Endothelial cell of umbilical vein (primary cell): ENCODE measurements at regions of chr20 and their contacts with region 1.

Region 1: DNA sequence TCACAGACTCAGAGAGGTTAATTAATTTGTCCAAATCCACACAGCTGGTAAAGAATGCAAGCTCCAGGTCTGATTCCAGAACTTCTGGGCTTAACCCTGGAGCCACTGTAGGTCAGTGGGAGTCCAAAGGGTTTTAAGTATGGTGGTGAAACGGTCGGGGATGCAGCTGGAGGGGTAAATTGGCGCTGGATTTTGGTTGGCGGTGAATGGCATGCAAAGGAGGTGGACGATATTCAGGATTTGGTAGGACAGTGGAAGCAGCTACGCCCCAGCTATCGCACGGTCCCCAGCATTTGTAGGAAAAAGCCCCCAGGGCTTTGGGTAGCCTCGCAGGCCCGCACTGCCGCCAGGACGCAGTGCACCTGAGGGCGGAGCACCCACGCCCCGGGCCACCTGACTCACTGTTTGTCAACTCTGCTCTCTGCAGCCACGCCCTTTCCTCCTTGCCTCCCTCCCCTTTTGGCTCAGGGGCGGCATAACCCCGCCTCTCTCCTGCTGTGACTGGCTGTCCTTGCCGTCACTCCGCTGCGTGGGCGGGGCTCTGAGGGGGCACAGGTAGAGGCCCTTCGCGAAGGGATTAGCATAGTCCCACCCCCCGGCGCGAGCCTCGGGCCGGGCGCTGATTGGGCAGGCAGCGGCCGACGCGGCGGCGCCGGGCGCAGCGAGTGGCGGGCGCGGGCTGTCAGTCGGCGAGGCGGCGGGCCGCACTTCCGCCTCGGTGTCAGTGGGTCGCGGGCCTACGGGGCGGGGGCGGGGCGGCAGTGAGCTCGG is at the start of gene OSBPL2:
- DNase-seq: peak; percentile 99
- H3K4me3 ChIP-seq: peak within 1 kb of the TSS in 2 of 3 experiments; percentile 20 to 74
- H3K27ac ChIP-seq: no peak within 1 kb of the TSS
- H3K4me1 ChIP-seq: peaks cover 5% of the 10 kb centered on the region
- H3K27me3 ChIP-seq: no peaks in the 10 kb centered on the region
- CTCF ChIP-seq: no peak
- POLR2A ChIP-seq: no peak
- total RNA-seq, gene OSBPL2: 32.7 and 33.0 TPM in 2 replicates

Region 2: DNA sequence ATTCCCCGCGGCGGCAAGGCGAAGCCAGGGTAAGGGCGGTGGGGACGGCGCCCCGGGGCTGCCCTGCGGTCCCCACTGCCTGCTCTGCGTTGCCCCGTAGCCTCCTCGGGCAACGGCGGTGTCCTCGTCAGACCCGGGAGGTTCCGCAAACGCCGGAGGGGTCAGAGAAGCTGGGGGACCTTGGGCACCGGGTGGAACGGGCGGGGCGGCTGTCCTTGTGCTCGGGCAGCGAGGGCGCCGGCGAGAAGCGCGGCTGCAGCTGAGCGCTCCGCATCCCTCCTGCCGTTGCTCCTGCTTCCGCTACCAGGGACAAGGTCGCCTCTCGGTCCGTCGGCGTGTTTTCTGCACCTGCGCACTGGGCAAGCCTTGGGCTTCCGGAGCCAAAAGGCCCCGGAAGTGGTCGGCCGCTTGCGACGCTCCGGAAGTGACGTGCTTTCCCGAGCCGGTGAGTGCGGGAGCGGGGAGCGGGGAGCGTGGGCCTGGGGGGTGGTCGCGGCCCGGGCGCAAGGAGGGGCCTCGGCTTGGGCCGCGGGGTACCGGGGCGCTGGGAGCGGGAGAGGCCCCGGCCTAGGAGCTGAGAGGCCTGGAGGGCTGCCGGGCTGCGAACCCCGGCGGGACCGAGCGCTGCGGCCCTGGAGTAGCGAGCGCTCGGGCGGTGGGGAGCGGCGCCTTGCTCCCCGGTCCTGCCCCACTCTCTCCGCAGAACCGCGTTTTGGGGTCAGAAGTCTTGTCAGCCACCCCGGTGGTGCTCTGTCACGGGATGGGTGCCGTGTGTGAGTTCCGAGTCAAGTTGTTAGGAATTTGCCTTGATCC is 55.2 kb before region 1 on chr20 and contains the start of gene MTG2:
- CTCF ChIA-PET with region 1: no interaction called
- POLR2A ChIA-PET with region 1: no interaction called
- dilution Hi-C with region 1: no loop called
- intact Hi-C with region 1: loop called (anchors 1 kb)
- DNase-seq: peak; percentile 93
- H3K4me3 ChIP-seq: peak within 1 kb of the TSS; percentile 87 to 98 (median 93)
- H3K27ac ChIP-seq: peak within 1 kb of the TSS; percentile 92
- H3K4me1 ChIP-seq: peaks cover 22% of the 10 kb centered on the region
- H3K27me3 ChIP-seq: no peaks in the 10 kb centered on the region
- CTCF ChIP-seq: no peak
- POLR2A ChIP-seq: peak; percentile 90
- total RNA-seq, gene MTG2: 22.1 and 31.6 TPM in 2 replicates

Region 3: DNA sequence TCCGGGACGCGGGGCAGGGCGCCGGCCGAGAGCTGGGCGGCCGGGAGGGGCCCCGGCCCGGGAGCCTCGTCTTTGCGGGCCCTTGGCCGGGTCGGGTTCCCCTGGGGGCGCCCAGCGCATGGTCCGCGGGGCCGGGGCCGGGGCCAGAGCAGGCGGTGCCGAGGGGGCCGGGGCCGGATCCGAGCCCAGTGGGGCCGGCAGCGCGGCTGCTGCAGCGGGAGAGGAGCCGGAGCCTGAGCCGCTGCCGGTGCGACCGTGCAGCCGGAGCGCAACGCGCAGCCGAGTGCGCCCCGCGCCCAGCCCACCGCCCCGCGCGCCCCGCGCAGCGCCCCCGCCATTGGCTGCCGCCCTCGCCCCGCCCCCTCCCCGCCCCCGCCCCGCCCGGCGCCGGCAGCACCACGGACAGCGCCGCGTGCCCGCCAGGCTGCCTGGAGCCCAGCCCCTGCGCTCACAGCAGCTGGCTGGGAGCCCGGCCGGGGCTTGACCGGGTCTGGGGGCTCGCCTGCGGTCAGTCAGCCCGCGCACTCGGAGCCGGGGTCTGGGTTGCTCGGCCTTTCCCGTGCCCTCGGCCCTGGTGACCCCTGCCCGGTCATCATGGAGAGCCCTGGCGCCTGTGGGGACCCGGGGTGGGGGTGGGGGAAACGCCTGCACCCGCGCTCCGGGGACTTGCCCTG is 17.9 kb before region 1 on chr20 and contains the start of gene HRH3:
- CTCF ChIA-PET with region 1: no interaction called
- POLR2A ChIA-PET with region 1: no interaction called
- dilution Hi-C with region 1: no loop called
- intact Hi-C with region 1: loop called (anchors 1 kb)
- DNase-seq: no peak
- H3K4me3 ChIP-seq: peak within 1 kb of the TSS in 1 of 3 experiments; percentile 6
- H3K27ac ChIP-seq: no peak within 1 kb of the TSS
- H3K4me1 ChIP-seq: peaks cover 3% of the 10 kb centered on the region
- H3K27me3 ChIP-seq: peaks cover 34 to 35% of the 10 kb centered on the region in 2 experiments
- CTCF ChIP-seq: no peak
- POLR2A ChIP-seq: no peak
- total RNA-seq, gene HRH3: not detected in 2 replicates

Region 4: GRCh38 chr20:62285722-62286121 is 47.7 kb after region 1 on chr20:
- CTCF ChIA-PET with region 1: no interaction called
- POLR2A ChIA-PET with region 1: no interaction called
- dilution Hi-C with region 1: no loop called
- intact Hi-C with region 1: loop called (anchors 2 kb)
- DNase-seq: peak; percentile 98
- H3K4me3 ChIP-seq: no peak overlapping the region
- H3K27ac ChIP-seq: peak overlapping the region; percentile 91
- H3K4me1 ChIP-seq: peaks cover 19% of the 10 kb centered on the region
- H3K27me3 ChIP-seq: no peaks in the 10 kb centered on the region
- CTCF ChIP-seq: no peak
- POLR2A ChIP-seq: peak; percentile 89

Region 5: GRCh38 chr20:62616728-62617621 is 379.0 kb after region 1 on chr20:
- CTCF ChIA-PET with region 1: no interaction called
- POLR2A ChIA-PET with region 1: no interaction called
- dilution Hi-C with region 1: no loop called
- intact Hi-C with region 1: no loop called
- DNase-seq: peak; percentile 75
- H3K4me3 ChIP-seq: no peak overlapping the region
- H3K27ac ChIP-seq: no peak overlapping the region
- H3K4me1 ChIP-seq: peaks cover 20% of the 10 kb centered on the region
- H3K27me3 ChIP-seq: no peaks in the 10 kb centered on the region
- CTCF ChIP-seq: peak; percentile 96 to 99
- POLR2A ChIP-seq: no peak